Caco-2 (cell line): ENCODE measurements at regions of chr4 and their contacts with region 1.

Region 1: GRCh38 chr4:102620697-102621497 is 119.7 kb downstream of the NFKB1 start:
- DNase-seq: peak; percentile 74 to 81
- H3K4me3 ChIP-seq: peak overlapping the region; percentile 30
- H3K4me3 Mint-ChIP-seq: peak overlapping the region; percentile 73
- H3K27ac Mint-ChIP-seq: peak overlapping the region; percentile 87
- H3K4me1 ChIP-seq: peaks cover 28% of the 10 kb centered on the region
- H3K4me1 Mint-ChIP-seq: peaks cover 39% of the 10 kb centered on the region
- H3K27me3 ChIP-seq: no peaks in the 10 kb centered on the region
- H3K27me3 Mint-ChIP-seq: no peaks in the 10 kb centered on the region
- CTCF ChIP-seq: peak; percentile 60

Region 2: DNA sequence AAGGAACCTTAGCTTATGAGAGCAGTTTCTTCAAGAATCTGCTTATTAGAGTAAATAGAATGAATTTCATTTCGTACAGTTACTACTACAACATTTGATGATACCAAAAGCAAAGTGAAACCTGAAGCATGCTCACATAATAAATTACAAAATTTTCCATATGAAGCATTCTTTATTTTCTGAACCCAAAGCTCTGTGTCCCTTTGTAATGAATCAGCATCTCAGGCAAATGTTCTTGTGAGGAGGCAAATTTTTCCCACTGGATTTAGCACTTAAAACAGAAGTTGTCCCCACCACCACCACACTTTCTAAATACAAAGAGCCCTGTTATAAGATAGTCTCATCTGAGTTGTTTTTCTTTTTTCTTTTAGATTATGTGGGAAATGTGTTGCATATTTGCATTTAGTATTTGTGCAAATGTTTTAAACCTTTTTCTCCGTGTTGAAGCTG is 190.4 kb before region 1 on chr4:
- CTCF ChIA-PET with region 1: interaction called, 8 read pairs
- POLR2A ChIA-PET with region 1: no interaction called
- intact Hi-C with region 1: loop called (anchors 1 kb)
- DNase-seq: no peak
- H3K4me3 ChIP-seq: peak overlapping the region; percentile 41
- H3K4me3 Mint-ChIP-seq: peak overlapping the region; percentile 82
- H3K27ac Mint-ChIP-seq: peak overlapping the region; percentile 77
- H3K4me1 ChIP-seq: peaks cover 5% of the 10 kb centered on the region; the same call in 1 of the 2 replicates
- H3K4me1 Mint-ChIP-seq: peaks cover 10% of the 10 kb centered on the region
- H3K27me3 ChIP-seq: no peaks in the 10 kb centered on the region
- H3K27me3 Mint-ChIP-seq: no peaks in the 10 kb centered on the region
- CTCF ChIP-seq: no peak

Region 3: GRCh38 chr4:102454981-102455685 is 165.8 kb before region 1 on chr4:
- CTCF ChIA-PET with region 1: no interaction called
- POLR2A ChIA-PET with region 1: no interaction called
- intact Hi-C with region 1: no loop called
- DNase-seq: no peak
- H3K4me3 ChIP-seq: no peak overlapping the region
- H3K4me3 Mint-ChIP-seq: no peak overlapping the region
- H3K27ac Mint-ChIP-seq: no peak overlapping the region
- H3K4me1 ChIP-seq: no peaks in the 10 kb centered on the region
- H3K4me1 Mint-ChIP-seq: no peaks in the 10 kb centered on the region
- H3K27me3 ChIP-seq: no peaks in the 10 kb centered on the region
- H3K27me3 Mint-ChIP-seq: no peaks in the 10 kb centered on the region
- CTCF ChIP-seq: no peak

Region 4: DNA sequence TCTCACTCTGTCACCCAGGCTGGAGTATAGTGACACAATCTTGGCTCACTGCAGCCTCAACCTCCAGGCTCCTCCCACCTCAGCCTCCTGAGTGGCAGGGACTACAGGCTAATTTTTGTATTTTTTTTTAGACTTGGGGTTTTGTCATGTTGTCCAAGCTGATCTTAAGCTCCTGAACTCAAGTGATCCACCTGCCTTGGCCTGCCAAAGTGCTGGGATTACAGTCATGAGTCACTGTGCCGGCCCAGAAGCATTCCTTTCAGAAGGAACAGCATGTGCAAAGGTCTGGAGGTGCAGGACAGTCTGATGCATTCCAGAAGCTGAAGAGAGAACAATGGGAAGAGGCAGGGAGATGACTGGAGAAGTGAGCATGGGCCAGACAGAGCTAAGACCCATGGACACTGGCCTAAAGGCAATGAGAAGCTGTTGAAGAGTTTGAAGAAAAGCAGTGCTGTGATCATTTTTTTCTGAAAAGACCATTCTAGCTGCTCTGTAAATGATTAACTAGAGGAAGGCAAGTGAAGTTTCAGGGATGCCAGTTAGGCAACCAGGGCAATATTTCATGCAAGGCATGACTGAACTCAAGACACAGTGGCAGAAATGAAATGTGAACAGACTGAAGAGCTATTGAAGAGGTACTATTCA is 96.7 kb after region 1 on chr4:
- CTCF ChIA-PET with region 1: interaction called, 7 read pairs
- POLR2A ChIA-PET with region 1: no interaction called
- intact Hi-C with region 1: loop called (anchors 1 kb)
- DNase-seq: peak; percentile 38 to 56
- H3K4me3 ChIP-seq: no peak overlapping the region
- H3K4me3 Mint-ChIP-seq: peak overlapping the region; percentile 1
- H3K27ac Mint-ChIP-seq: peak overlapping the region; percentile 25
- H3K4me1 ChIP-seq: peaks cover 35% of the 10 kb centered on the region
- H3K4me1 Mint-ChIP-seq: peaks cover 25% of the 10 kb centered on the region
- H3K27me3 ChIP-seq: no peaks in the 10 kb centered on the region
- H3K27me3 Mint-ChIP-seq: no peaks in the 10 kb centered on the region
- CTCF ChIP-seq: no peak

Region 5: GRCh38 chr4:102809190-102809589 is 188.3 kb after region 1 on chr4:
- CTCF ChIA-PET with region 1: no interaction called
- POLR2A ChIA-PET with region 1: no interaction called
- intact Hi-C with region 1: loop called (anchors 5 kb)
- DNase-seq: no peak
- H3K4me3 ChIP-seq: no peak overlapping the region
- H3K4me3 Mint-ChIP-seq: no peak overlapping the region
- H3K27ac Mint-ChIP-seq: no peak overlapping the region
- H3K4me1 ChIP-seq: no peaks in the 10 kb centered on the region; the same call in 1 of the 2 replicates
- H3K4me1 Mint-ChIP-seq: peaks cover 14% of the 10 kb centered on the region
- H3K27me3 ChIP-seq: no peaks in the 10 kb centered on the region
- H3K27me3 Mint-ChIP-seq: no peaks in the 10 kb centered on the region
- CTCF ChIP-seq: no peak

Region 6: DNA sequence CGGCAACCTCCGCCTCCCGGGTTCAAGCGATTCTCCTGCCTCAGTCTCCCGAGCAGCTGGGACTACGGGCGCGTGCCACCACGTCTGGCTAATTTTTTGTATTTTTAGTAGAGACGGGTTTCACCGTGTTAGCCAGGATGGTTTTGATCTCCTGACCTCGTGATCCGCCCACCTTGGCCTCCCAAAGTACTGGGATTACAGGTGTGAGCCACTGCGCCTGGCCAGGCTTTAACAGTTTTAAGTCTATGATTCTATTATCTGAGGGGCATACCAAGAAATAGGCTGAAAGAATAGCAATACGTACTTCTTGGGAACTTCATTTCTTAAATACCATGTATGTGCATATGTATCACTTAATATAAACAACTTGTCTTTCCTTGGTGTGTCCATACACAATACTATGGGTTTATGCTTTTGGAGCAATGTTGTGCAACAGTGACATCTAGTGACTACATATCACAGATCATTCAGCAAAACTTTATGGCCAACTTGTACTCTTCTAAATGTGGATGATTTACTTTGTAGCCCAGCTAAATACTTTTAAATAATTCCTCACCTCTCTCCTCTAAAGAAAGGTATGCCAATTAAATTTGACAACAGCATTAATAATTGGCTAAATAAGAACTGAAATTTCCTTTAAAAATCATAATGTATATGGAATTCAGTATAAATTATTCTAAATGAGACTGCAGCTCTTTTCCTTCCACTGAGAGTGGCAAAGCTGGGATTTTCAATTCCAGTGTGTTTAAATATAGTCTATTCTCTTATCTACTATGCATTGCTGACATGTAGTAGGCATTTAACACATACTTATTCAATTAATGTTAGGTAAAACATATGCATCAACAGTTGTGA is 388.2 kb after region 1 on chr4:
- CTCF ChIA-PET with region 1: interaction called, 10 read pairs
- POLR2A ChIA-PET with region 1: no interaction called
- intact Hi-C with region 1: loop called (anchors 1 kb)
- DNase-seq: peak in 1 of 2 experiments; percentile 58
- H3K4me3 ChIP-seq: no peak overlapping the region
- H3K4me3 Mint-ChIP-seq: no peak overlapping the region
- H3K27ac Mint-ChIP-seq: no peak overlapping the region
- H3K4me1 ChIP-seq: no peaks in the 10 kb centered on the region; the same call in 1 of the 2 replicates
- H3K4me1 Mint-ChIP-seq: no peaks in the 10 kb centered on the region
- H3K27me3 ChIP-seq: no peaks in the 10 kb centered on the region
- H3K27me3 Mint-ChIP-seq: peaks cover 2% of the 10 kb centered on the region
- CTCF ChIP-seq: peak; percentile 62 to 68

Region 7: GRCh38 chr4:103099691-103100392 is 478.9 kb after region 1 on chr4 and contains the start of gene BDH2:
- CTCF ChIA-PET with region 1: interaction called, 8 read pairs
- POLR2A ChIA-PET with region 1: no interaction called
- intact Hi-C with region 1: loop called (anchors 2 kb)
- DNase-seq: peak; percentile 57 to 67
- H3K4me3 ChIP-seq: peak within 1 kb of the TSS; percentile 31
- H3K4me3 Mint-ChIP-seq: peak within 1 kb of the TSS; percentile 71
- H3K27ac Mint-ChIP-seq: peak within 1 kb of the TSS; percentile 18
- H3K4me1 ChIP-seq: 0 out of 2 replicates have a peak, but pooled peaks cover 8% of the 10 kb centered on the region
- H3K4me1 Mint-ChIP-seq: peaks cover 7% of the 10 kb centered on the region
- H3K27me3 ChIP-seq: no peaks in the 10 kb centered on the region
- H3K27me3 Mint-ChIP-seq: no peaks in the 10 kb centered on the region
- CTCF ChIP-seq: peak; percentile 45 to 54
- total RNA-seq, gene BDH2: 17.4 and 19.7 TPM in 2 replicates

Region 8: DNA sequence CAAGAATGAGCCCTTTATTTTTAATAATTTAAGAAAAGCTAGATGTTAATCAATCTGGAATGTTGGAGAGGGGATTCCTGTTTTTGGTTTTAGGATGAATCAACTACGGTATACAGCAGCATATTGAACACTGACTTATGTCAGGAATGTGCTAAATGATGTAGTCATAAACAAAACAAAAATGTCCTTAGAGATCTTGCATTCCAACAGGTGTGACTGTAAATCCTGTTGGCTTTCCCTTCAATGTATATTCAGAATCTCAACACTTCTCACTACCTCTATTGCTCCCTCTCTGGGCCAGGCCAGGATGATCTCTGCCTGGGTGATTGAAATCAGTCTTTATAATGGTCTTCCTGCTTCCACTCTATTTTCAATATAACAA is 516.5 kb after region 1 on chr4:
- CTCF ChIA-PET with region 1: no interaction called
- POLR2A ChIA-PET with region 1: no interaction called
- intact Hi-C with region 1: no loop called
- DNase-seq: no peak
- H3K4me3 ChIP-seq: no peak overlapping the region
- H3K4me3 Mint-ChIP-seq: no peak overlapping the region
- H3K27ac Mint-ChIP-seq: no peak overlapping the region
- H3K4me1 ChIP-seq: no peaks in the 10 kb centered on the region
- H3K4me1 Mint-ChIP-seq: no peaks in the 10 kb centered on the region
- H3K27me3 ChIP-seq: no peaks in the 10 kb centered on the region
- H3K27me3 Mint-ChIP-seq: no peaks in the 10 kb centered on the region
- CTCF ChIP-seq: no peak

Region 9: GRCh38 chr4:103354006-103354405 is 733.1 kb after region 1 on chr4:
- CTCF ChIA-PET with region 1: no interaction called
- POLR2A ChIA-PET with region 1: no interaction called
- intact Hi-C with region 1: no loop called
- DNase-seq: no peak
- H3K4me3 ChIP-seq: no peak overlapping the region
- H3K4me3 Mint-ChIP-seq: no peak overlapping the region
- H3K27ac Mint-ChIP-seq: no peak overlapping the region
- H3K4me1 ChIP-seq: no peaks in the 10 kb centered on the region
- H3K4me1 Mint-ChIP-seq: no peaks in the 10 kb centered on the region
- H3K27me3 ChIP-seq: no peaks in the 10 kb centered on the region
- H3K27me3 Mint-ChIP-seq: no peaks in the 10 kb centered on the region
- CTCF ChIP-seq: no peak